Heart right ventricle (tissue), 16 donors: ENCODE measurements at regions of chr12 and their contacts with region 1.

Region 1: GRCh38 chr12:20807192-20808080 is 3.1 kb upstream of the SLCO1B3 start:
- DNase-seq: peak in 1 of 2 donors; percentile 10
- ATAC-seq: no peak
- H3K4me3 ChIP-seq: no peak overlapping the region
- H3K27ac ChIP-seq: no peak overlapping the region
- H3K4me1 ChIP-seq: no peaks in the 10 kb centered on the region
- H3K27me3 ChIP-seq: no peaks in the 10 kb centered on the region
- CTCF ChIP-seq: no peak

Region 2: GRCh38 chr12:20404576-20405346 is 402.7 kb before region 1 on chr12:
- intact Hi-C with region 1: no loop called
- DNase-seq: peak; percentile 19
- ATAC-seq: peak in 7 of 8 donors; percentile 32 to 59 (median 42)
- H3K4me3 ChIP-seq: no peak overlapping the region
- H3K27ac ChIP-seq: peak overlapping the region in 5 of 10 donors; percentile 1 to 42 (median 17)
- H3K4me1 ChIP-seq: peaks cover 0 to 67% (median 30%) of the 10 kb centered on the region in 9 donors
- H3K27me3 ChIP-seq: no peaks in the 10 kb centered on the region
- CTCF ChIP-seq: no peak

Region 3: DNA sequence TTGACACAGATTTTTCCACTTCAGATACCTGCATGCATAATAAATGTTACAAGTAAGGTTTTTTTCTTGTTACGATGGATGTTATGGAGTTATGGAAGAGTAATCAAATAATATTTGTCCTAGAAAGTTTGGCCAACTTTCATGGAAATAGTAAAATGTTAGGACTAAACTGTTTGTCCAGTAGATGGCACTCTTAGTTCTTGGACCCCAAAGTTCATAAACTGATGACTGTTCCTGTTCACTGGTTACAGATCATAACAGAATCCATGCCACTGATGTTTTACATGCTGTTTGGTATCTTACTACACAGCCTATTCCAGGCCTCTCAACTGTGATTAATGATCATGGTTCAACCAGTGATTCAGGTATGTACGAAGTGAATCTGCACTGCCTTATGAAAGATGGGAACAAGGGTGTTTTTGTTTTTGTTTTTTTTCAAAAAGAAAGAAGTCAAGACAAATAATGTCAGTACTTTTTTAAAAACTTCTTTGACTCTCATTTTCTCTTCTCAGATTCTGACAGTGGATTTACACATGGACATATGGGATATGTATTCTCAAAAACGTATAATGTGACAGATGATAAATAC is 161.1 kb before region 1 on chr12:
- intact Hi-C with region 1: loop called in 1 of 10 experiments (anchors 10 kb)
- DNase-seq: no peak
- ATAC-seq: peak in 5 of 8 donors; percentile 37 to 47 (median 40)
- H3K4me3 ChIP-seq: no peak overlapping the region
- H3K27ac ChIP-seq: no peak overlapping the region
- H3K4me1 ChIP-seq: peaks cover 0 to 2% (median 0%) of the 10 kb centered on the region in 9 donors
- H3K27me3 ChIP-seq: no peaks in the 10 kb centered on the region
- CTCF ChIP-seq: peak in 8 of 9 donors; percentile 21 to 66 (median 54)

Region 4: GRCh38 chr12:20852649-20853048 is 45.2 kb after region 1 on chr12:
- intact Hi-C with region 1: no loop called
- DNase-seq: no peak
- ATAC-seq: no peak
- H3K4me3 ChIP-seq: no peak overlapping the region
- H3K27ac ChIP-seq: no peak overlapping the region
- H3K4me1 ChIP-seq: no peaks in the 10 kb centered on the region
- H3K27me3 ChIP-seq: no peaks in the 10 kb centered on the region
- CTCF ChIP-seq: no peak